Activated T-helper 2 cell treated with anti-CD3 and anti-CD28 coated beads, Interferon-gamma antibody, Interleukin-2, Interleukin-4, amounts not matched to agents 10 μg/mL and 5 μg/mL and 100 μg/mL, durations not matched to agents 14 hours and 24 hours and 36 hours (primary cell): ENCODE measurements at regions of chr19 and their contacts with region 1.

Region 1: DNA sequence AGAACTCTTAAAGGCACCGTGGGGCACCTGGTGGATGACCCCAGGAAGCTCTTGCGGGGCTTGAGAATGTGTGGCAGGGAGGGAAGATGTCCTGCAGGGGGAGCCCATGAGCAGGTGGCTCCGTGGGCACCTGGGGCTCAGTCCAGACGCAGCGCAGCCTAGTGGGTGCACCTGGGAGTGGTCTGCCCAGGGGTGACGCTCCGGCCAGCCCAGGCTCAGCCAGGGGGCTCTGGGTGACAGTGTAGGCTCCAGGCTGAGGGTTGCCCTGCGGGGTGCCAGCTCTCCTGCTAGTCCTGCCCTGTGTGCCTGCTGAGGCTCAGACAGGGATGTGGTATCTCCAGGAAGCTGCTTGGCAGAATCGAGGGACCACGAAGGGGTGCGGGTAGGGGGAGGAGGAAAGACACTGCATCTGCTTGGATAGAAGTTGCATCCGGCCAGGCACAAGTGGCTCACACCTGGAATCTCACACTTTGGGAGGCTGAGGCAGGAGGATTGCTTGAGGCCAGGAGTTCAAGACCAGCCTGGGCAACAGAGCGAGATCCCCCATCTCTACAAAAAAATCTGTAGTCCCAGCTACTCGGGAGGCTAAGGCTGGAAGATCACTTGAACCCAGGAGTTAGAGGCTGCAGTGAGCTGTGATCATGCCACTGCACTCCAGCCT is 15.0 kb upstream of the PGLS start:
- DNase-seq: peak; percentile 74
- H3K4me3 Mint-ChIP-seq: no peak overlapping the region
- H3K27ac Mint-ChIP-seq: no peak overlapping the region
- H3K4me1 Mint-ChIP-seq: peaks cover 14% of the 10 kb centered on the region
- H3K27me3 Mint-ChIP-seq: no peaks in the 10 kb centered on the region

Region 2: GRCh38 chr19:17424743-17425365 is 71.6 kb before region 1 on chr19:
- intact Hi-C with region 1: no loop called
- DNase-seq: peak; percentile 21
- H3K4me3 Mint-ChIP-seq: no peak overlapping the region
- H3K27ac Mint-ChIP-seq: no peak overlapping the region
- H3K4me1 Mint-ChIP-seq: peaks cover 6% of the 10 kb centered on the region
- H3K27me3 Mint-ChIP-seq: no peaks in the 10 kb centered on the region

Region 3: GRCh38 chr19:17570791-17571190 is 74.3 kb after region 1 on chr19:
- intact Hi-C with region 1: loop called (anchors 5 kb)
- DNase-seq: no peak
- H3K4me3 Mint-ChIP-seq: no peak overlapping the region
- H3K27ac Mint-ChIP-seq: no peak overlapping the region
- H3K4me1 Mint-ChIP-seq: peaks cover 1% of the 10 kb centered on the region
- H3K27me3 Mint-ChIP-seq: no peaks in the 10 kb centered on the region